Posterior vena cava (tissue), 2 donors: ENCODE measurements at regions of chr4 and their contacts with region 1.

Region 1: GRCh38 chr4:48046059-48046458 is 29.5 kb downstream of the NIPAL1 start:
- DNase-seq: no peak

Region 2: DNA sequence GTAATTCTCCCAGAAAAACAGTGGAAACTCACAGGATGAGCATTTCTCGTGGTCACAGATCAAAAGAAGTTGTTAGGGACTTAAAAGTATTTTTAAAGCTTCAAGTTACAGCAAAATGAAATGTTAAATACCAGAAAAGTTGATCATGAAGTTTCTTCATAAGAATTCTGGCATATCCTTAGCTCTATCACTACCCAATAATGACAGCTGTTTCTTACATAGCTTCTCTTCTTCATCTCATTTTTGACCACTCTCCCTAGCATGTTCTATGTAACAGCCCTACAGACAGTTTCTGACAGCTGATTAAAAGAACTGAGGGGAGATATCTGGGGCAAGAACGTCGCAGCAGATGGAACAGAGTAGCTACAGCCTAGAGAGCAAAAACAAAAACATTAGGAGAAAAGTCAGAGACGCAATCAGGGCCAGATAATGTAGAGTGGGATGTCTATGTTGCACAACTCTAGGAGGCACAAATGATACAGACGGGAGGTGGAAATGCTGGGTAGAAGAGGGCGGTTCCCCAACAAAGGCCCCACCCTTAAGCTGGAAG is 316.9 kb before region 1 on chr4:
- intact Hi-C with region 1: no loop called
- DNase-seq: no peak

Region 3: DNA sequence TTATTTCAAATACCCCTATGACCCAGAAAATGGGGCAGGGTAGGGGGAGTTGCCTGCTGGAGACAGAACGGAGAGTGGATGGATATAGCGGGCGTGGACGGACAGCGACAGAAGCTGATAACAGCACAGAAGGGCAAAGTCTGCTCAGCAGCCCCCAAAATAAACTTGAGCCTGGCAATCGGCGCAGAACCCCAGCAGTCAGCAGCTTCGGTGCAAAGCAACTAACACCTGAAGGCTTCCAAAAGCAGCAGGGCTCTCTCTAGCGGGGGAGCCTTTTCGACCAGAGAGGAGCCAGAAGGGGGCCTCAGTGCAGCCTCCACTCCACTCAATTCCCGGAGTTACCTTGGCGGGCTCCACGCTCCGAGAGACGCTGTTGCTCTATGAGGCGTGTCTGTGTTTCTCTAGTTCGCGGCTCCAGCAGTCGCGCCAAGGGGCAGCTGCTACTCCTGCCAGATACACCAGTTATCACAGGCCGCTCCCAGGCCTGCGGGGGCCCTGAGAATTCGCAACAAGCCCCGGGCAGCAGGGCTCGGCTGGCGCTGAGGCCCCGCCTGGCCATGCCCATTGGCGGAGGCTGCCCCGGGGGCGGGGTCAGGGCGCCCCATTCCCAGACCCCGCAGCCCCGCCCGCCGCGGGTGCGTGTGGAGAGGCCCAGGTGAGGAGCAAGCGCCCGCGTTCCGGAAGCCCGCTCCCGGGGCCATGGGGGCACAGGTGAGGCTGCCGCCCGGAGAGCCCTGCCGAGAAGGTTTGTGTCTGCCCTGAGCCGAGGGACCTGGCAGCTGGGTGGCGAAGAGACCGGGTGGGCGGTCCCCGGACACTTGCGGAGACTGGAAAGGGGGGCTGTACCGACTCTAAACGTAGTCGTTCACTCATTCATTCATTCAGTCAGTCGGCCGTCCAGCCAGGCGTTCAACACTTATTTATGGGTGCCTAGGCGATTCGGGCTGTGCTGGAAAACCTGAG is 29.6 kb before region 1 on chr4 and contains the starts of genes CNGA1 and NIPAL1:
- intact Hi-C with region 1: loop called in 1 of 2 experiments (anchors 1 kb)
- DNase-seq: no peak
- total RNA-seq, gene CNGA1: 0.57 to 0.60 TPM
- total RNA-seq, gene NIPAL1: 0.28 to 0.48 TPM